ENCODE measurements at regions of chr14 and their contacts with region 1.

Region 1: DNA sequence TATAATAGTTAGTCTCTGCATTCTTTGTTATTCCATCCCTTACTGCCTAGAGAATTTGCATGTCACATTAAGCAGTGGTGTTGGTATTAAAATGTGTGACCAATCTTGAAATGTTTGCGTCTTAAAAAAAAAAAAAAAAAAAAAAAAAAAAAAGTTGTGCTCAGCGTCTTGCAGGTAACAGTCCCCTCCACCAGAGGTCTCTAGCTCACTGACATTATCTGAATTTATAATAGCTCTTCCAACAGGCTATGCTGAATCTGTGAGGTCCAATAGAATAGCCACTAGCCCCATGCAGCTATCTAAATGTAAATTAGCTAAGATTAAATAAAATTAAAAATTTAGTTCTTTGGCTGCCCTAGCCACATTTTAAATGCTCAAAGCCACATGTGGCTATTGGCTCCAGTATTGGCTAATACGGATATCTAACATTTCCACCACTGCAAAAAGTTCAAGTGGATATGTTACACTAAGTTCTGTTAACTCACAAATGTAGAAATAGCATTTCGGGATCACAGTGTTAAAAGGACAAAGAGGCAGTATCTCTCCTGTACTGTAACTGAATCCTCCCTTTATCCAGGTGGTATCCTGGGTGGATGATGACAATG is 28.7 kb downstream of the NKX2-8 start:
- DNase-seq: peak; percentile 21
- H3K4me3 Mint-ChIP-seq: no peak overlapping the region
- H3K27ac Mint-ChIP-seq: no peak overlapping the region
- H3K4me1 Mint-ChIP-seq: no peaks in the 10 kb centered on the region
- H3K27me3 Mint-ChIP-seq: peaks cover 1% of the 10 kb centered on the region

Region 2: GRCh38 chr14:36070031-36070719 is 483.6 kb before region 1 on chr14:
- CTCF ChIA-PET with region 1: interaction called, 34 read pairs
- intact Hi-C with region 1: loop called (anchors 1 kb)
- DNase-seq: peak; percentile 70
- H3K4me3 Mint-ChIP-seq: no peak overlapping the region
- H3K27ac Mint-ChIP-seq: no peak overlapping the region
- H3K4me1 Mint-ChIP-seq: no peaks in the 10 kb centered on the region
- H3K27me3 Mint-ChIP-seq: peaks cover 21% of the 10 kb centered on the region

Region 3: GRCh38 chr14:36324897-36325296 is 228.9 kb before region 1 on chr14:
- CTCF ChIA-PET with region 1: no interaction called
- intact Hi-C with region 1: no loop called
- DNase-seq: no peak
- H3K4me3 Mint-ChIP-seq: no peak overlapping the region
- H3K27ac Mint-ChIP-seq: no peak overlapping the region
- H3K4me1 Mint-ChIP-seq: peaks cover 6% of the 10 kb centered on the region
- H3K27me3 Mint-ChIP-seq: peaks cover 22% of the 10 kb centered on the region

Region 4: GRCh38 chr14:36373982-36374673 is 179.6 kb before region 1 on chr14:
- CTCF ChIA-PET with region 1: interaction called, 4 read pairs
- intact Hi-C with region 1: loop called (anchors 1 kb)
- DNase-seq: peak; percentile 87
- H3K4me3 Mint-ChIP-seq: no peak overlapping the region
- H3K27ac Mint-ChIP-seq: no peak overlapping the region
- H3K4me1 Mint-ChIP-seq: no peaks in the 10 kb centered on the region
- H3K27me3 Mint-ChIP-seq: no peaks in the 10 kb centered on the region

Region 5: GRCh38 chr14:36597775-36598174 is 44.0 kb after region 1 on chr14:
- CTCF ChIA-PET with region 1: interaction called, 14 read pairs
- intact Hi-C with region 1: no loop called
- DNase-seq: no peak
- H3K4me3 Mint-ChIP-seq: no peak overlapping the region
- H3K27ac Mint-ChIP-seq: no peak overlapping the region
- H3K4me1 Mint-ChIP-seq: no peaks in the 10 kb centered on the region
- H3K27me3 Mint-ChIP-seq: peaks cover 27% of the 10 kb centered on the region

Region 6: GRCh38 chr14:36941783-36942521 is 388.2 kb after region 1 on chr14:
- CTCF ChIA-PET with region 1: interaction called, 21 read pairs
- intact Hi-C with region 1: loop called (anchors 1 kb)
- DNase-seq: peak; percentile 75
- H3K4me3 Mint-ChIP-seq: no peak overlapping the region
- H3K27ac Mint-ChIP-seq: no peak overlapping the region
- H3K4me1 Mint-ChIP-seq: no peaks in the 10 kb centered on the region
- H3K27me3 Mint-ChIP-seq: peaks cover 4% of the 10 kb centered on the region

Measured in activated naive CD4-positive, alpha-beta T cell treated with anti-CD3 and anti-CD28 coated beads for 36 hours (primary cell).